ENCODE measurements at regions of chr11 and their contacts with region 1.

Region 1: DNA sequence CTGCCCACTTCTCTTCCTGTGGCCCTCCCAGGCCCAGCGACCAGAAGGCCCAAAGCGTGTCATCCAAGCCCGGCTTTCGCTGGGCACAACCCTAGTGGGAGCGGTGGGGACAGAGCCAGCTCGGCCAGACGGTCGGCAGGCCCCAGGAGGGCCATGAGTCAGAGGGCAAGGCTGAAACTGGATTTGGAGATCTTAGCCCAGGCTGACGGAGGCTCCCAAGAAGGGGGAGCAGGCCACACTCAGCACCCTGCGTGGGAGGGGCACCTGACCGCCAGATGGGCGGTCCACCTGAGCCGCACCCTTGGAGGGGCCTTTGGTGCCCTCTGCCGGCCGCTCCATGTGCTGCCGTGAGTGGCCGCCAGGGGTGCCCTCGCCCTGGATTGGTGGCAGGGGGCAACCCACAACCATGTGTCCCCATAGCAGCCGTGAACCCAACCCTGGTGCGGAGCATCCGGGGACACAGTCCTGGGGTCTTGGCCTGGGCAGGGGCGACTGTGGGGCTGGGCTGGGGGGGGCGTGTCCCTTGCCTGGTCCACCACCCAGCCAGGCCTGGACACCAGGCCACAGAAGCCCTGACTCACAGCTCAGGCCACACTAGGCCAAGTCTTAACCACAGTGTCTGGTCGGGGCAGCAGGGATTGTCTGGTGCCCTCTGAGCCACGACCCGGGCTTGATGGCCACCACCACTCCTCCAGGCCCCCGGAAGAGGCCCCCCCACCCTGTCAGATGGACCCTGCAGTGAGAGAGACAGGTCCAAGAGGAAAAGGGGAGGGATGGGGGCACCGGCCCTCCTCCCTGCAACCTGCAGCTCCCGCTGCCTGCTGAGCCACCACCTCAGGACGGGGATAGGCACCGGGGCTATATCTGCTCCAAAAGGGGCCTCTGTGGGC is 19.2 kb upstream of the TALDO1 start:
- DNase-seq: peak; percentile 87
- ATAC-seq: peak; percentile 69
- H3K4me3 Mint-ChIP-seq: no peak overlapping the region
- H3K27ac Mint-ChIP-seq: no peak overlapping the region
- H3K4me1 Mint-ChIP-seq: peaks cover 14% of the 10 kb centered on the region
- H3K27me3 Mint-ChIP-seq: peaks cover 6% of the 10 kb centered on the region

Region 2: GRCh38 chr11:554824-555472 is 173.2 kb before region 1 on chr11:
- CTCF ChIA-PET with region 1: interaction called, 150 read pairs
- DNase-seq: peak; percentile 82
- ATAC-seq: peak; percentile 83
- H3K4me3 Mint-ChIP-seq: peak overlapping the region; percentile 9
- H3K27ac Mint-ChIP-seq: no peak overlapping the region
- H3K4me1 Mint-ChIP-seq: peaks cover 5% of the 10 kb centered on the region
- H3K27me3 Mint-ChIP-seq: peaks cover 18% of the 10 kb centered on the region

Region 3: GRCh38 chr11:629237-629583 is 98.9 kb before region 1 on chr11:
- CTCF ChIA-PET with region 1: no interaction called
- DNase-seq: no peak
- ATAC-seq: peak; percentile 45
- H3K4me3 Mint-ChIP-seq: peak overlapping the region; percentile 46
- H3K27ac Mint-ChIP-seq: peak overlapping the region; percentile 10
- H3K4me1 Mint-ChIP-seq: peaks cover 20% of the 10 kb centered on the region
- H3K27me3 Mint-ChIP-seq: peaks cover 26% of the 10 kb centered on the region

Region 4: DNA sequence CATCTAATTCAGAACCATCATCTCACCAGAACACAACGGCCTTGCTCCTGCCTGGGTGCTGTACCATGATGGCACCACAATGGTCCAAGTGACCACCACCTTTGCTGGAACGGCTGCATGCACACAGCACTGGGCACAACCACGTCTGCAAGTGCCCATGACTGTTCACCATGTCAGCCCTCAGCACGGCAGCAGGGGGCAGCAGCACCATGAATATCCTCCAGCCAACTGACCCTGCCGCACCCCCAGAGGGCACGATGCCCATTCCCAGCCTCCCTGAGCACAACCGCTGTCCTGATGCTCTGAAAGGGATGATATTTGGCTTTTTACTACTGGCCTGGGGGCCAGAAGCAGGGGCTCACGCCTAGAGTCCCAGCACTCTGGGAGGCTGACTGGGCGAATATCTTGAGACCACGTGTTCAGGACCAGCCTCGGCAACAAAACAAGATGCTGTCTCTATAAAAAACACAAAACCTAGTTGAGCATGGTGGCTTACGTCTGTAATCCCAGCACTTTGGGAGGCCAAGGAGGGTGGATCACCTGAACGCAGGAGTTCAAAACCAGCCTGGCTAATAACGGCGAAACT is 65.3 kb before region 1 on chr11:
- CTCF ChIA-PET with region 1: interaction called, 21 read pairs
- DNase-seq: peak; percentile 56
- ATAC-seq: peak; percentile 68
- H3K4me3 Mint-ChIP-seq: no peak overlapping the region
- H3K27ac Mint-ChIP-seq: no peak overlapping the region
- H3K4me1 Mint-ChIP-seq: no peaks in the 10 kb centered on the region
- H3K27me3 Mint-ChIP-seq: no peaks in the 10 kb centered on the region

Region 5: GRCh38 chr11:695538-696248 is 32.4 kb before region 1 on chr11 and contains the start of gene TMEM80:
- CTCF ChIA-PET with region 1: interaction called, 104 read pairs
- DNase-seq: peak; percentile 99
- ATAC-seq: peak; percentile 81
- H3K4me3 Mint-ChIP-seq: peak within 1 kb of the TSS; percentile 84
- H3K27ac Mint-ChIP-seq: peak within 1 kb of the TSS; percentile 93
- H3K4me1 Mint-ChIP-seq: peaks cover 51% of the 10 kb centered on the region
- H3K27me3 Mint-ChIP-seq: no peaks in the 10 kb centered on the region
- total RNA-seq, gene TMEM80: 23.5 to 26.0 TPM

Region 6: GRCh38 chr11:706957-707816 is 20.9 kb before region 1 on chr11:
- CTCF ChIA-PET with region 1: interaction called, 12 read pairs
- DNase-seq: no peak
- ATAC-seq: no peak
- H3K4me3 Mint-ChIP-seq: no peak overlapping the region
- H3K27ac Mint-ChIP-seq: no peak overlapping the region
- H3K4me1 Mint-ChIP-seq: peaks cover 5% of the 10 kb centered on the region
- H3K27me3 Mint-ChIP-seq: peaks cover 15% of the 10 kb centered on the region

Region 7: DNA sequence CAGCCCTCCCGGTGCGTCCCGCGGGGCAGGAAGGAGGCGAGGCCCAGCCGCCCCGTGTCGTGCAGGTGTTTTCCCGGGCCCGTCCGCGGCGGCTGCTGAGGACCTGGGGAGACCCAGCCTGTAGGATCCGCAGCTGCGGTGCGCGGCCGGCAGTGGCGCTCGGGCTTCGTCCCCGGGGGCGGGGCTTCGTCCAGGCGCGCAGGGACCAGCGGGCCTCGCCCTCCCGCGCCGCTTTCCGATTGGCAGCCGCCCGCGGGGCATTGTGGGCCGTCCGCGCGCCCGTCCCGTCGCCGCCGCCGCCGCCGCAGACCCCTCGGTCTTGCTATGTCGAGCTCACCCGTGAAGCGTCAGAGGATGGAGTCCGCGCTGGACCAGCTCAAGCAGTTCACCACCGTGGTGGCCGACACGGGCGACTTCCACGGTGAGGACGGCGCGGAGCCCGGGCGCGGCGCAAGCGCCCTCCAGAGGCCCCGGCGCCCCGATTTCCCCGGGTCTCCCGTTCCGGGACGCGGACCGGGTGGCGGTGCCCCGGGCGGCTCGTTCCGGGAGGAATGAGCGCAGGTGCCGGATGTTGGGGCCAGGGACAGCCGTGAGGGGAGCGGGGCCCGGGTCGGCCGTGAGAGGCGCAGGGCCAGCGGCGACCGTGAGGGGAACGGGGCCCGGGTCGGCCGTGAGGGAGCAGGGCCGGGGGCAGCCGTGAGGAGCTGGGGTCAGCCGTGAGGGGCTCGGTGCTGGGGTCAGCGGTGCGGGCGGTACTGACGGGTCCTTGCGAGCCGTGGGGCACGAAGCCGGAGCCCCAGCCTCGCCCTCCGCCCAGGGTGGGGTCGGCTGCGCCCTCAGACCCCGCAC is 19.3 kb after region 1 on chr11 and contains the start of gene TALDO1:
- CTCF ChIA-PET with region 1: interaction called, 46 read pairs
- DNase-seq: peak; percentile 89
- ATAC-seq: peak; percentile 92
- H3K4me3 Mint-ChIP-seq: peak within 1 kb of the TSS; percentile 84
- H3K27ac Mint-ChIP-seq: peak within 1 kb of the TSS; percentile 80
- H3K4me1 Mint-ChIP-seq: peaks cover 26% of the 10 kb centered on the region
- H3K27me3 Mint-ChIP-seq: no peaks in the 10 kb centered on the region
- total RNA-seq, gene TALDO1: 249 to 293 TPM

Measured in activated CD8-positive, alpha-beta memory T cell treated with anti-CD3 and anti-CD28 coated beads, Interleukin-2, amount 10 ng/mL, durations not matched to agents 7 days and 5 days (primary cell).